ENCODE measurements at regions of chr1 and their contacts with region 1.

Region 1: DNA sequence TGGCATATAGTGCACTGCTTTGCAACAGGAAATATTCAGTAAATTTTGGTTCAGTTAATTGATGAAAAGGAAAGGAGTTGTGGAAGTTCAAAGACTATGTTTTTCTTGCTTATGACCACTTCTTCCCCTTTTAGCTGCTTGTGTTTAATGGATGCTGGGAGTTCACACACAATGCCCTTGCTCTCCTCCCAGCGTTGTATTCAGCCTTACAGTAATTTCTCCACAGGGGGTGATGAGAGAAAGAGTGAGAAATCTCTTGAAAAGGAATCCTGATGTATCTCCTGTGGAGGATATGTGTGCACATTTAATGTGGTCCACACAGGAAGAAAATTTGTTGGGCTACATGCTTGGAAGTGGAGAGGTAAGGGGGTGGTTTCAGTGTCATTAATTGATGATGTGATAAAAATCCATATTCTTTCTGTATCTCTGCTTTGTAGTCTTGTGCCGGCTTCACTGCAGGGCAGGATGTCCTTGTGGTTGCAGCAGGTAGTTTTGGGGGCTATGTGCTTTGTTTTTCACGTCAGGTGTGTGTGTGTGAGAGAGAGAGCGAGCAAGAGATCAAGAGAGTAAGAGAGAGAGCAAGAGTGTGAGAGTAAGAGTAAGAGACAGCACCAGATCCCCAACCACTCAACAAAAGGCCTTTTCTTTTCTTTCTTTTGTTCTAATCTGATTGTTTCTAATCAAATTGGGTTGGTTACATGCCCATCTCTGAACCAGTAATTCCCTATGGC is 204.4 kb downstream of the RWDD3 start:
- DNase-seq: no peak
- ATAC-seq: no peak
- H3K4me3 ChIP-seq: no peak overlapping the region
- H3K27ac ChIP-seq: no peak overlapping the region
- H3K4me1 ChIP-seq: no peaks in the 10 kb centered on the region
- H3K27me3 ChIP-seq: no peaks in the 10 kb centered on the region
- CTCF ChIP-seq: no peak

Region 2: DNA sequence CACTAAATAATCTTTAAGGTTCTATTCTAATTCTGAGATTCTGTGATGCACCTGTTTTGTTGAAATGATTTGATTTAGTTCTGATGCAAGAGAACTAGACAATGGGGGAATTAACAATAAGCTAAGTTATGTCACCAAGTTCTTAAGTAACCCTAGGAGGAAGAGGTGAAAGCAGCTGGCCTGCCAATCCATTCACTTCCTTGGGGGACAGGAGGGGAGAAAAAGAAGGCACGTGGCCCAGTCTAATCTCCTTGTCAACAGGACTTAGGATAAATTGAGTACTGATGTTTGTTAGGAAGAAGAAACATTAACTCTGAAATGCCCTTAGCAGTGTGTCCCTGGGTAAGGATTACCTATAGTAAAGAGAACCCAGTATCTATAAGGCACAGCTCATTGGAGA is 284.3 kb before region 1 on chr1:
- CTCF ChIA-PET with region 1: no interaction called
- POLR2A ChIA-PET with region 1: interaction called, 12 read pairs
- in situ Hi-C with region 1: no loop called
- intact Hi-C with region 1: no loop called
- DNase-seq: no peak
- ATAC-seq: no peak
- H3K4me3 ChIP-seq: no peak overlapping the region
- H3K27ac ChIP-seq: no peak overlapping the region
- H3K4me1 ChIP-seq: no peaks in the 10 kb centered on the region
- H3K27me3 ChIP-seq: no peaks in the 10 kb centered on the region
- CTCF ChIP-seq: no peak